H1 (cell line): ENCODE measurements at regions of chr15 and their contacts with region 1.

Region 1: GRCh38 chr15:71114896-71115554 is at the start of gene THSD4:
- DNase-seq: peak; percentile 66 to 97
- H3K4me3 ChIP-seq: peak within 1 kb of the TSS; percentile 68 to 96 (median 73)
- H3K27ac ChIP-seq: no peak within 1 kb of the TSS
- H3K4me1 ChIP-seq: peaks cover 2 to 11% (median 4%) of the 10 kb centered on the region in 4 experiments; a peak in 5 of 7 replicates
- H3K27me3 ChIP-seq: peaks cover 0 to 16% (median 12%) of the 10 kb centered on the region in 4 experiments; a peak in 6 of 7 replicates
- CTCF ChIP-seq: peak; percentile 74 to 93 (median 86)
- EP300 ChIP-seq: peak; percentile 5 to 74; a peak in 2 of 3 replicates
- POLR2A ChIP-seq: no peak
- RAD21 ChIP-seq: peak; percentile 45 to 76
- total RNA-seq, gene THSD4: 6.2 and 6.4 TPM in 2 replicates

Region 2: GRCh38 chr15:71011503-71012155 is 103.4 kb before region 1 on chr15:
- CTCF ChIA-PET with region 1: interaction called, 22 read pairs
- POLR2A ChIA-PET with region 1: no interaction called
- DNase-seq: no peak
- H3K4me3 ChIP-seq: no peak overlapping the region
- H3K27ac ChIP-seq: no peak overlapping the region
- H3K4me1 ChIP-seq: no peaks in the 10 kb centered on the region
- H3K27me3 ChIP-seq: no peaks in the 10 kb centered on the region
- CTCF ChIP-seq: peak in 2 of 3 experiments; percentile 53 to 73; a peak in 2 of 4 replicates
- EP300 ChIP-seq: no peak
- POLR2A ChIP-seq: no peak
- RAD21 ChIP-seq: peak; percentile 87 to 93

Region 3: GRCh38 chr15:71043361-71043760 is 71.7 kb before region 1 on chr15:
- CTCF ChIA-PET with region 1: no interaction called
- POLR2A ChIA-PET with region 1: no interaction called
- DNase-seq: no peak
- H3K4me3 ChIP-seq: no peak overlapping the region
- H3K27ac ChIP-seq: no peak overlapping the region
- H3K4me1 ChIP-seq: no peaks in the 10 kb centered on the region
- H3K27me3 ChIP-seq: no peaks in the 10 kb centered on the region
- CTCF ChIP-seq: no peak
- EP300 ChIP-seq: no peak
- POLR2A ChIP-seq: no peak
- RAD21 ChIP-seq: no peak

Region 4: GRCh38 chr15:71092056-71092600 is 22.9 kb before region 1 on chr15:
- CTCF ChIA-PET with region 1: no interaction called
- POLR2A ChIA-PET with region 1: no interaction called
- DNase-seq: peak in 1 of 2 experiments; percentile 30
- H3K4me3 ChIP-seq: no peak overlapping the region
- H3K27ac ChIP-seq: no peak overlapping the region
- H3K4me1 ChIP-seq: no peaks in the 10 kb centered on the region
- H3K27me3 ChIP-seq: peaks cover 0 to 5% (median 1%) of the 10 kb centered on the region in 4 experiments; a peak in 3 of 7 replicates
- CTCF ChIP-seq: no peak
- EP300 ChIP-seq: no peak
- POLR2A ChIP-seq: no peak
- RAD21 ChIP-seq: no peak

Region 5: DNA sequence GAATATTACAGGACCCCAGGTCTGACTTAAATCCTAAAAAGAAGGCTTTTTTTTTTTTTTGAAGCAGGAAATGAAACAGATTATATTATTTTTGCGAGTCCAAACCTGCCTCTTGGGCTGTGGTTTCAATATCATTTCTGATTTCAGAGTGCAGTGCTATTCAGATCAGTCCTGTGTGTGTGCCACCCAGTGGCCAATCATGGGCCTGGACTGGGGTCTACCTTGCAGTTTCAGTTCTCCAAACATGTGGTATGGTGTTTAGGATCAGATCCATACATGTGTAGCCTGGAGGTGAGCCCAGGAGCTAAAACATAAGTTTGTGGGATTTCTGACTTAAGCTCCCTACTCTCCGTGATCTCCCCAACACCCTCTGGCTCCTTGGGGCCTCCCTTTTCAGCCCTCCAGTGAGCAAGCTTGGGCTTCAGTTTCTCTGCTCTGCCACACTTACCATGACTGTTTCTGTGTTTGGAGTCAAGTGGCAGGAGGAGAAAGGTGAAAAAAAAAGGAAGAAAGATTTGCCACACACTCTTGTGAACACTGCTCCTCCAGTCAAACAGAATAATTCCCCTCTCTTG is 11.8 kb before region 1 on chr15:
- CTCF ChIA-PET with region 1: interaction called, 12 read pairs
- POLR2A ChIA-PET with region 1: no interaction called
- DNase-seq: peak in 1 of 2 experiments; percentile 34
- H3K4me3 ChIP-seq: no peak overlapping the region
- H3K27ac ChIP-seq: no peak overlapping the region
- H3K4me1 ChIP-seq: peaks cover 0 to 2% (median under 1%) of the 10 kb centered on the region in 4 experiments; a peak in 2 of 7 replicates
- H3K27me3 ChIP-seq: peaks cover 0 to 1% (median 0%) of the 10 kb centered on the region in 4 experiments; a peak in 1 of 7 replicates
- CTCF ChIP-seq: peak; percentile 46 to 58 (median 56)
- EP300 ChIP-seq: no peak
- POLR2A ChIP-seq: no peak
- RAD21 ChIP-seq: peak; percentile 52 to 58

Region 6: GRCh38 chr15:71304681-71305080 is 189.7 kb after region 1 on chr15:
- CTCF ChIA-PET with region 1: no interaction called
- POLR2A ChIA-PET with region 1: no interaction called
- DNase-seq: no peak
- H3K4me3 ChIP-seq: no peak overlapping the region
- H3K27ac ChIP-seq: no peak overlapping the region
- H3K4me1 ChIP-seq: no peaks in the 10 kb centered on the region
- H3K27me3 ChIP-seq: no peaks in the 10 kb centered on the region
- CTCF ChIP-seq: no peak
- EP300 ChIP-seq: no peak
- POLR2A ChIP-seq: no peak
- RAD21 ChIP-seq: no peak

Region 7: GRCh38 chr15:71397377-71397776 is 282.4 kb after region 1 on chr15:
- CTCF ChIA-PET with region 1: no interaction called
- POLR2A ChIA-PET with region 1: no interaction called
- DNase-seq: no peak
- H3K4me3 ChIP-seq: no peak overlapping the region
- H3K27ac ChIP-seq: no peak overlapping the region
- H3K4me1 ChIP-seq: peaks cover under 1 to 12% (median 6%) of the 10 kb centered on the region in 4 experiments; a peak in 4 of 7 replicates
- H3K27me3 ChIP-seq: no peaks in the 10 kb centered on the region; a peak in 1 of 7 replicates
- CTCF ChIP-seq: no peak
- EP300 ChIP-seq: no peak
- POLR2A ChIP-seq: no peak
- RAD21 ChIP-seq: no peak